ENCODE measurements at regions of chr11 and their contacts with region 1.

Region 1: GRCh38 chr11:65471410-65471762 is 27.5 kb upstream of the MALAT1 start:
- DNase-seq: no peak
- H3K4me3 Mint-ChIP-seq: no peak overlapping the region
- H3K27ac Mint-ChIP-seq: peak overlapping the region; percentile 96
- H3K4me1 Mint-ChIP-seq: peaks cover 38% of the 10 kb centered on the region
- H3K27me3 Mint-ChIP-seq: no peaks in the 10 kb centered on the region

Region 2: GRCh38 chr11:65448418-65449105 is 22.8 kb before region 1 on chr11:
- CTCF ChIA-PET with region 1: interaction called, 5 read pairs
- POLR2A ChIA-PET with region 1: interaction called, 73 read pairs
- DNase-seq: no peak
- H3K4me3 Mint-ChIP-seq: peak overlapping the region; percentile 10
- H3K27ac Mint-ChIP-seq: peak overlapping the region; percentile 55
- H3K4me1 Mint-ChIP-seq: peaks cover 8% of the 10 kb centered on the region
- H3K27me3 Mint-ChIP-seq: no peaks in the 10 kb centered on the region

Region 3: DNA sequence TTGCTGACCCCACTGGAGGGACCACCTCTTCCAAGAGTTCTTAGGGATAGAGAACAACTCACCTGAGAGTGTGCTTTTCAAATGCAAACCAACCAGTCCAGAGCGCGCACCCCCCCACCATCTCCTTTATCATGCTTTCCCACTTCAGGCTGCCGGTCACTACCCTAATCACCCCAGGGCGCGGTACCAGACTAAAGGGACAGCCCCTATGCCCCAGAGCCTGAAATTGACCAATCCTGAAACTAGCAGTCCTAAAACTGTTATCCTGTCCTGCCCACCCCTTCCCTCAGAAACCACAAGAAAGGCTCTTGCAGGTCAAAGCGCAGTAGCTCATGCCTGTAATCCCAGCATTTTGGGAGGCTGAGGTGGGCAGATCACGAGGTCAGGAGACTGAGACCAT is 11.8 kb before region 1 on chr11:
- CTCF ChIA-PET with region 1: interaction called, 3 read pairs
- POLR2A ChIA-PET with region 1: interaction called, 15 read pairs
- DNase-seq: no peak
- H3K4me3 Mint-ChIP-seq: no peak overlapping the region
- H3K27ac Mint-ChIP-seq: no peak overlapping the region
- H3K4me1 Mint-ChIP-seq: peaks cover 28% of the 10 kb centered on the region
- H3K27me3 Mint-ChIP-seq: peaks cover 1% of the 10 kb centered on the region

Region 4: DNA sequence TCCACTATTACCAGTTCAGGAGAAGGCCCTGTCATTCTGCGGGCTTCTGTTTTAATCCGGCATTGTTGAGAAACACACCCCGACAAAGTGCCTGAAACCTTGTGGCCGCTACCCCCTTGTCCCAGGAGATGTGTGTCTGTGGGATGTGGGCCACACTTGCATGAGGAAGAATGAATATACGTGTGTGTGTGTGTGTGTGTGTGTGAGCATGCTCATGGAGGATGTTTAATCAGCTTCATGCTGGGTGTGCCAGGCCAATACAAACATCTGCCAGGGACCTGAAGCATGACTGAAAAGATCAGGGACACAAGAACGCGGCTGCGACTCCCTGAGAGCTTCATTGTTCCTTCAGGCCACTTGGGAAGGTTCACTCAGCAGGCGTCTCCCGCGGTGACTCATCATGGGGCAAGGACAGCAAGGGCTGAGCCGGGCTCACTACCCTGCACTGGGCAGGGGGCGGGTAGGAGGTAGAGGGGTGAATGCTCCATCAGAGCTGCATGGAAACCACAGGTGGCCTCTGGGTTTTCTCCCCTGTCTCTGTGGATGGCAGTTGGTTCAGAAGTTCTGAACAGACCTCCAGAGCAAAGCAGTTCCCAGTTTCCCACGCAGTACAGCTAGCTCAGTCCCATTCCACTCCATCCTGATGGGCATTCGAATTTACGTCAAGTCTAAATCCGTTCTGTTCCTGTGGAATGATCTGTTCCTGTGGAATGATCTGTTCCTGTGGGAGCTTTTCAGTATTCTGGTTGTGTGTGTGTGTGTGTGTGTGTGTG is 20.4 kb after region 1 on chr11:
- CTCF ChIA-PET with region 1: interaction called, 50 read pairs
- POLR2A ChIA-PET with region 1: interaction called, 1,583 read pairs
- DNase-seq: no peak
- H3K4me3 Mint-ChIP-seq: no peak overlapping the region
- H3K27ac Mint-ChIP-seq: no peak overlapping the region
- H3K4me1 Mint-ChIP-seq: peaks cover 58% of the 10 kb centered on the region
- H3K27me3 Mint-ChIP-seq: no peaks in the 10 kb centered on the region